Dorsolateral prefrontal cortex (tissue), 120 donors: ENCODE measurements at regions of chr7 and their contacts with region 1.

Region 1: GRCh38 chr7:77536413-77537135 is 521 bp upstream of the PTPN12 start:
- DNase-seq: peak; percentile 93 to 99 (median 97)
- H3K4me3 ChIP-seq: peak overlapping the region; percentile 57 to 99 (median 94)
- H3K27ac ChIP-seq: peak overlapping the region; percentile 63 to 99 (median 93)
- H3K27me3 ChIP-seq: no peaks in the 10 kb centered on the region
- CTCF ChIP-seq: peak in 9 of 56 donors; percentile 6 to 45 (median 13)

Region 2: GRCh38 chr7:77439572-77439971 is 97.0 kb before region 1 on chr7:
- intact Hi-C with region 1: loop called in 1 of 2 experiments (anchors 5 kb)
- DNase-seq: peak in 9 of 10 donors; percentile 46 to 83 (median 60)
- H3K4me3 ChIP-seq: peak overlapping the region in 11 of 59 donors; percentile 9 to 42 (median 28)
- H3K27ac ChIP-seq: peak overlapping the region in 4 of 59 donors; percentile 18 to 39 (median 32)
- H3K27me3 ChIP-seq: no peaks in the 10 kb centered on the region
- CTCF ChIP-seq: peak in 55 of 56 donors; percentile 31 to 81 (median 58)

Region 3: DNA sequence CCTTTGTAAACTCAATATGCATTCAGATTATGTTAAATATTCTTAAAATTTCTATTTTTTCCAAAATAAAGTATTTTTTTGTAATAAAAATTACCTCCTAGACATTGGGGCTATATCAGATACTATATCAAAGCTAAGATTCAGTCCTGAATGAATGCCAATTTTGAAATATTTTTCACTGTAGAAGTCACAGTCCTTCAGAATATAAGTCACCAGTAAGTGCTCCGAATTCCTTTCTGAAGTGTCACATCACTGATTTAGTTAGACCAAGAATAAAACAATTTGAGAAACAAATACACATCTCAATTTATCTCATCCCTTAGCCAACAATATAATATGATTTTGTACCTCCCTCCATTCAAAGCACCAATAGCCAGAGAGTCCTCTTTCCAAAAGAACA is 86.5 kb before region 1 on chr7:
- intact Hi-C with region 1: loop called in 1 of 2 experiments (anchors 2 kb)
- DNase-seq: no peak
- H3K4me3 ChIP-seq: peak overlapping the region in 2 of 59 donors; percentile 8 to 31
- H3K27ac ChIP-seq: peak overlapping the region in 53 of 59 donors; percentile 15 to 91 (median 80)
- H3K27me3 ChIP-seq: no peaks in the 10 kb centered on the region
- CTCF ChIP-seq: no peak

Region 4: DNA sequence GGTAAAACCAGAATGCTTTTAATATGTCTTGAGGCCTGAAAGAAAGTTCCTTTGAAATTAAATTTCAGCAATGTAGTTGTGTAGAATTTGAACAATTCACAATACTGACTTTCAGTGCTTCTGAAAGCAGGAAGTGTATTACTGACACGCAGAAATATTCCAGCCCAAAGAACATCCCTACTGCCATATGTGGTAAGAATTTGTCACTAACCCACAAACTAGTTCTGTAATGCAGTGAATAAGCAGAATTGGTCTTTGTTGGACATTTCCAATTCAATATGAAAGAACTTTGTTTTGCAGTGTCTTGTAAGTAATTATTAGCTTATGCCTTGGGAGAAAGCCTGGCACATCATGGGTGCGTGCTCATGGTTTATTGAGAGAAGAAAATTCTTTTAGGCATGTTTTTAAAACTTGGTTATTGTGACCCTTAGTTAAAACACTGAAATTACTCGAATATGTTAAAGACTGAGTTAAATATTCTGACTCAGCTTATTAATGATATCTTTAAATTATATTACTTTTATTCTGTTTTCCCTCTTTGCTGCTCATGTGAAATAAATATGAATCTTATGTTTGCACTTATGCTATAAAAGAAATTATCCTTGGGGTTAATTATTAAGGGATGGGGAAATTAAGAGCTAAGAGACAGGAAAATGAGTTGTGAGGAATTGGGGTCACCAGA is 33.9 kb after region 1 on chr7:
- intact Hi-C with region 1: no loop called
- DNase-seq: no peak
- H3K4me3 ChIP-seq: peak overlapping the region in 3 of 59 donors; percentile 6 to 23 (median 9)
- H3K27ac ChIP-seq: peak overlapping the region in 29 of 59 donors; percentile 0 to 61 (median 27)
- H3K27me3 ChIP-seq: no peaks in the 10 kb centered on the region
- CTCF ChIP-seq: peak in 1 of 56 donors; percentile 20

Region 5: DNA sequence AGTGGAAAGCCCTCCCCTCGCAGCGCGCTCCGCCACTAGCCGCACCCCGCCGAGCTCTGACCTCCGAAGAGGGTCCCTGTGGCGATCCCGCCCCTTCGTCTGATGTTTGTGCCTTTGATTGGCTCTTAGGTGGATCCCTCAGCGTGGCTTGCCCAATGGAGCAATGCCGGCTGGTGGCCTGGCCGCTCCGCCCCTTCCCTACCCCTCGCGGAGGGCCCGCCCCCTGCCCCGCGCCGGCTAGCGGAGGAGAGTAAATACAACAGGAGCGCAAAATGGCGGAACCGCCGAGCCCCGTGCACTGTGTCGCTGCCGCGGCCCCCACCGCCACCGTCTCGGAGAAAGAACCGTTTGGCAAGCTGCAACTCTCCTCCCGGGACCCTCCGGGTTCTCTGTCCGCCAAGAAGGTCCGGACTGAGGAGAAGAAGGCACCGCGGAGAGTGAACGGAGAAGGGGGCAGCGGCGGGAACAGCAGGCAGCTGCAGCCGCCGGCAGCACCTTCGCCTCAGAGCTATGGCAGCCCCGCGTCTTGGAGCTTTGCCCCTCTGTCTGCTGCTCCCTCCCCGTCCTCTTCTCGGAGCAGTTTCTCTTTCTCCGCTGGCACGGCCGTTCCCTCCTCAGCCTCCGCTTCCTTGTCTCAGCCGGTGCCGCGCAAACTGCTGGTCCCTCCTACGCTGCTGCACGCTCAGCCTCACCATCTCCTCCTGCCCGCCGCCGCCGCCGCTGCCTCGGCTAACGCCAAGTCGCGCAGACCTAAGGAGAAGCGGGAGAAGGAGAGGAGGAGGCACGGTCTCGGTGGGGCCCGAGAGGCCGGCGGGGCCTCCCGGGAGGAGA is 159.8 kb after region 1 on chr7 and contains the start of gene RSBN1L:
- intact Hi-C with region 1: loop called in 1 of 2 experiments (anchors 5 kb)
- DNase-seq: peak; percentile 95 to 100 (median 99)
- H3K4me3 ChIP-seq: peak within 1 kb of the TSS; percentile 66 to 100 (median 96)
- H3K27ac ChIP-seq: peak within 1 kb of the TSS; percentile 89 to 100 (median 99)
- H3K27me3 ChIP-seq: no peaks in the 10 kb centered on the region
- CTCF ChIP-seq: peak in 41 of 56 donors; percentile 12 to 57 (median 38)
- total RNA-seq, gene RSBN1L: 17.4 to 37.5 (median 26.3) TPM

Region 6: GRCh38 chr7:77989981-77990566 is 453.5 kb after region 1 on chr7:
- intact Hi-C with region 1: no loop called
- DNase-seq: no peak
- H3K4me3 ChIP-seq: no peak overlapping the region
- H3K27ac ChIP-seq: no peak overlapping the region
- H3K27me3 ChIP-seq: no peaks in the 10 kb centered on the region
- CTCF ChIP-seq: no peak